ENCODE measurements at regions of chr17 and their contacts with region 1.

Region 1: DNA sequence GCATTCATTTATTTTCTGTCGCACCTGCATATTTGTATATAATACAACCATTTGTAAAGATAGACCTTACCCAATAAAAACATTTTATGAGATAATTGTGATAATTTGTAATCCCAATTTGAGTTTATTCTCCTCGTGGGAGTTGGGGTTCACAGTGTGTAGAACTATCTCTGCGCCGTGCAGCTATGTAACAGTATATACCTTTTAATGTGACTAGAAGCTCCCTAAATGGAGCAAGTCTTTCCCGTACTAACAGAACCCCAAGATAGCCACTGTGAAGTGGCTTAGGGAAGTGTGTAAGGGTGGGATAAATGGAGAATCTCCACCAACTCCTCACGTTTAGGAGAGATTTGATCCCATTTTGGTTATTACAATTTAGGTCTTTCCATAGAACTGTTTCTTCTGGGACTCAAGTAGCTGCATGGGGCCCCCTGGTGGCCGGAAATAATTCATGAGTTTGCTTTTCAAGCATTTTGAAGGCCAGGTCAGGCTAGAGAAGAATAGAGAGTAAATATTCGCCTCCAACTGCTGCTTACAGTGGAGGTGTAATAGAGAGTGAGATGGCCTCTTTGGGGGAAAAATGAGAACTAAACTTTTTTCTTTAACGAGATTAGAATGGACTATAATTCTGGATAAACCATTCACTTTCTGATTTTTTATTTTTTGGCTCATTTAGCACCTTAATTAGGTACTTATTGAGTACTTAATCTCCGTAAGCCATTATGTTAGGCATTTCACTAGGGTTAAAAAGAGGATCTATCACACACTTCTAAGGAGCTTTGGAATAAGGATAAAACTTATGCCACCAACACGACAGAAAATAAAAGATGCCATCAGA is 4.5 kb downstream of the TMEM100 start:
- DNase-seq: peak; percentile 65
- ATAC-seq: peak; percentile 81
- H3K4me3 ChIP-seq: no peak overlapping the region
- H3K27ac ChIP-seq: no peak overlapping the region
- H3K4me1 ChIP-seq: no peaks in the 10 kb centered on the region
- H3K27me3 ChIP-seq: peaks cover 45% of the 10 kb centered on the region
- CTCF ChIP-seq: peak; percentile 60 to 98 (median 81); a peak in 5 of 6 replicates
- POLR2A ChIP-seq: no peak
- RAD21 ChIP-seq: peak; percentile 63

Region 2: DNA sequence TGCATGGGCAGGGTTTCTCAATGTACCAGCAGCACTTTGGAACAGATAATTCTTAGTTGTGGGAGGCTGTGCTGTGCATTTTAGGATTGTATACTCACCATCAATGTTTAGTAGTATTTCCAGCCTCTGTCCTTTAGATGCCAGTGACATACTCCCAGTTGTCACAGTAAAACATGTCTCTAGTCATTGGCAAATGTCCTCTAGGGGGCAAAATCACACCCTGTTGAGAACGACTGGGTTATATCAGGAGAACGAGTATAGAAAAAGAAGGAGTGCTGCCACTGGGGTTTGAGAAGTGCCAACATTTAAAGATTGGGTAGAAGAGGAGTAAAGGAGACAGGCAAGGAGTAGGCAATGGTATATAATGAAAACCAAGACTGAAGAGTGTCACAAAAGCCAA is 169.0 kb before region 1 on chr17:
- CTCF ChIA-PET with region 1: interaction called, 3 read pairs
- POLR2A ChIA-PET with region 1: no interaction called
- RAD21 ChIA-PET with region 1: no interaction called
- intact Hi-C with region 1: loop called (anchors 2 kb)
- DNase-seq: peak; percentile 40
- ATAC-seq: peak; percentile 98
- H3K4me3 ChIP-seq: no peak overlapping the region
- H3K27ac ChIP-seq: no peak overlapping the region
- H3K4me1 ChIP-seq: no peaks in the 10 kb centered on the region
- H3K27me3 ChIP-seq: peaks cover 72% of the 10 kb centered on the region
- CTCF ChIP-seq: peak; percentile 64 to 83 (median 71)
- POLR2A ChIP-seq: no peak
- RAD21 ChIP-seq: peak; percentile 73

Region 3: DNA sequence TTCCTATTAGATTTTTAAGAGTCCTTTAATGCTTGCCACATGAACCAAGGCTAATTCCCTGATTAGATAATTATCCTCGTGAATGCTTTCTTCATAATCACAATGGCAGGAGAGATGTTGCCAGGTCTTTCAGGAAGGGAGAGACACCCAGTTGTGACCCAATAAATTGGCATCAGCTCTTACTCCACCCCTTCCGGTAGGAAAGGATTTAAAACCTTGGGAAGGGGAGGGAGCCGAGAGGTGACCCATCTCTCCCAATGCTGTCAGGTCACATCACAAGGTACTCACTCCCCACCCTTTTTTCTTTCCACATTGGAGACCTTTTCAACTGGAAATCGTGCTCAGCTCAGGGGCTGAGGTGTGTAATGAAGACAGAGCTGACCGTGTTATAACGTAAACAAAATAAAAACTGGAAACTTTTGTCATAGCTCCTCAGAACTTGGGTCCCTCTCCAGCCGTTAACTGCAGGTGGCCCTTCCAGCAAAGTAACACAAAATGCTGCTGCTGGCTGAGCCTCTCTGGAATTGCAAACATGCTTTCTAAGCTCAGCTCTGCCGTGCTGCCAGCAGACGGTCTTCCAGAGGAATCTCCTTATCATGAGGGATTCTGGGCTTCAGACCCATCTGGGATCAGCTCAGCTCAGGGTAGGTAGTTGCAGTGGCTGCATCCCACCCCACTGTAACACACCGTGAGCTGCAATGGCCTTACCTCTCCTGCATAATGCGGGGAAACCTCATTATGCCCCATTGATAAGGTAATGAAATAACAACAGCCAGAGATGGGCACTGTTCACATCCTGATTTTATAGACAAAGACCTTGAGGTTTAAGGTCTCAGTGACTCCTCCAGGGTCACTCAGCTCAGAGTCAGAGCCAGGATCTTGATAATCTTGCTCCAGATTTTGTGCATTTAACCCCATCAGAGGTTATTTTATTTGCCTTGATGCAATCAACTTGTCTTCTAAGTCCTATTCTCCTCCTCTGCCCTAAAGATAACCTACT is 11.0 kb before region 1 on chr17:
- CTCF ChIA-PET with region 1: interaction called, 11 read pairs
- POLR2A ChIA-PET with region 1: no interaction called
- RAD21 ChIA-PET with region 1: no interaction called
- intact Hi-C with region 1: no loop called
- DNase-seq: no peak
- ATAC-seq: no peak
- H3K4me3 ChIP-seq: no peak overlapping the region
- H3K27ac ChIP-seq: no peak overlapping the region
- H3K4me1 ChIP-seq: peaks cover 2 to 4% of the 10 kb centered on the region in 2 experiments; a peak in 1 of 4 replicates
- H3K27me3 ChIP-seq: peaks cover 75% of the 10 kb centered on the region
- CTCF ChIP-seq: no peak
- POLR2A ChIP-seq: no peak
- RAD21 ChIP-seq: no peak

Region 4: GRCh38 chr17:55735731-55736405 is 17.8 kb after region 1 on chr17:
- CTCF ChIA-PET with region 1: interaction called, 58 read pairs
- POLR2A ChIA-PET with region 1: no interaction called
- RAD21 ChIA-PET with region 1: no interaction called
- intact Hi-C with region 1: no loop called
- DNase-seq: peak; percentile 49
- ATAC-seq: peak; percentile 86
- H3K4me3 ChIP-seq: no peak overlapping the region
- H3K27ac ChIP-seq: no peak overlapping the region
- H3K4me1 ChIP-seq: peaks cover 0 to 7% of the 10 kb centered on the region in 2 experiments; a peak in 1 of 4 replicates
- H3K27me3 ChIP-seq: peaks cover 20% of the 10 kb centered on the region; the same call in 1 of the 2 replicates
- CTCF ChIP-seq: peak; percentile 62 to 97 (median 80); a peak in 5 of 6 replicates
- POLR2A ChIP-seq: no peak
- RAD21 ChIP-seq: peak; percentile 46